ENCODE measurements at regions of chr5 and their contacts with region 1.

Region 1: DNA sequence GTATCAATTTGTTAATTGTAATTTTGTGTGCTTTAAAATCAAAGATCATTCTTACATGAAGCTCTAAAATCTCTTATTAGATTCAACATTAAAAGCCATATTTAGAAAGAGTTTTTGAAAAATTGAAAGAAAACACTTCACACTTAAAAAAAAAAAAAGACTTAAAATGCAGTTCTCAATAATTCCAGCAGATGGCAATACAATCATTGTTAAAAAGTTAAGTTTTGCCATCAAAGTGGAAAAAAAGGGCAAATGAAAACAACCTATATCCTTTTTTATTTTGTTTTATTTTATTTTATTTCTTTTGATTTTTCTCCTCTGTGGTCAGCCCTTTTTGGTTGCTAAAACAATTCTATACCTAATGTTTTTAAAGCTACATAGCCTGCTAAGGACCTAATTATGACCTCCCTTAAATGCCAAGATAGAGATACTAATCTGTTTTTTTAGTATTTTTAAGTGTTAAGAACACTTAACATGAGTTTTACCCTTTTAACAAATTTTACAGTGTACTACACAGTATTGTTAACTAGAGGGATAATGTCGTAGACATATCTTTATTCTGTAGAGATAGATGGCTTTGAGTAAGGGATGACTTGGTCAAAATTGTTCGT is 154.2 kb upstream of the DAB2 start:
- DNase-seq: peak; percentile 49
- ATAC-seq: no peak
- H3K4me3 ChIP-seq: no peak overlapping the region
- H3K27ac ChIP-seq: no peak overlapping the region
- H3K4me1 ChIP-seq: no peaks in the 10 kb centered on the region
- H3K27me3 ChIP-seq: peaks cover 7% of the 10 kb centered on the region
- CTCF ChIP-seq: peak; percentile 61
- POLR2A ChIP-seq: no peak
- RAD21 ChIP-seq: peak; percentile 64

Region 2: GRCh38 chr5:39691993-39692392 is 113.0 kb after region 1 on chr5:
- CTCF ChIA-PET with region 1: no interaction called
- POLR2A ChIA-PET with region 1: no interaction called
- dilution Hi-C with region 1: no loop called
- in situ Hi-C with region 1: loop called (anchors 10 kb)
- intact Hi-C with region 1: no loop called
- DNase-seq: no peak
- ATAC-seq: no peak
- H3K4me3 ChIP-seq: no peak overlapping the region
- H3K27ac ChIP-seq: no peak overlapping the region
- H3K4me1 ChIP-seq: no peaks in the 10 kb centered on the region
- H3K27me3 ChIP-seq: peaks cover 4% of the 10 kb centered on the region; the same call in 1 of the 2 replicates
- CTCF ChIP-seq: no peak
- POLR2A ChIP-seq: no peak
- RAD21 ChIP-seq: no peak

Region 3: DNA sequence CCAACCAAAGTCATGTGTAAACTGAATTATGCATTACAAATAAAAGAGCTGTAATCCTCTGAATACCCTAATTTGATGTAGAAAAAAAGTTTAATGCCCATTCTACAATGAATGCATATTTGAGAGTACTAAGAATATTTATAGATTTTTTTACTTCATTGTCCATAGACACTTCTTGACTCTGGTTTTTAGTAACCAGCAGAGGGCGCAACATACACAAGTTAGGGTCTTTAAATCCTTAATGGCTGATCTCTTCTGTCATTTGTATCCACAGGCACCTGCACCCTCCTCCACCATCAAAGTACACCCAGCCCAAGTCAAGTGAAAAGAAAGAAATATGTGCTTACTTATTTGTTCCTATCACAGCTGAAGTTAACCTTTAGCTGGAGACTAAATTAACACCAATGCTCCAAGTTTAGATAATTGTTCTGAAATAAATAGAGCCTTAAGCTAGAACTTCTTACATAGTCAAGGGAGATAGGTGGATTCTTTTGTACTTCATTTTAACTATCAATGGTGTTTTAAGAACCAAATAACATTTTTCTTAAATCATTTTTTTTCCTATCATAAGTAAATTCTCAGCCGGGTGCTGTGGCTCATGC is 370.0 kb after region 1 on chr5:
- CTCF ChIA-PET with region 1: no interaction called
- POLR2A ChIA-PET with region 1: no interaction called
- dilution Hi-C with region 1: no loop called
- in situ Hi-C with region 1: no loop called
- intact Hi-C with region 1: loop called (anchors 10 kb)
- DNase-seq: peak; percentile 76
- ATAC-seq: peak; percentile 77
- H3K4me3 ChIP-seq: no peak overlapping the region
- H3K27ac ChIP-seq: no peak overlapping the region
- H3K4me1 ChIP-seq: no peaks in the 10 kb centered on the region
- H3K27me3 ChIP-seq: no peaks in the 10 kb centered on the region
- CTCF ChIP-seq: peak; percentile 70
- POLR2A ChIP-seq: no peak
- RAD21 ChIP-seq: peak; percentile 78

Region 4: GRCh38 chr5:40736103-40736875 is 1157.3 kb after region 1 on chr5:
- CTCF ChIA-PET with region 1: no interaction called
- POLR2A ChIA-PET with region 1: no interaction called
- dilution Hi-C with region 1: no loop called
- in situ Hi-C with region 1: loop called (anchors 10 kb)
- intact Hi-C with region 1: loop called (anchors 1 kb)
- DNase-seq: peak; percentile 74
- ATAC-seq: peak; percentile 74
- H3K4me3 ChIP-seq: no peak overlapping the region
- H3K27ac ChIP-seq: no peak overlapping the region
- H3K4me1 ChIP-seq: peaks cover 14% of the 10 kb centered on the region
- H3K27me3 ChIP-seq: no peaks in the 10 kb centered on the region
- CTCF ChIP-seq: peak; percentile 88
- POLR2A ChIP-seq: no peak
- RAD21 ChIP-seq: peak; percentile 89

Measured in IMR-90 (cell line).